ENCODE measurements at regions of chr5 and their contacts with region 1.

Region 1: DNA sequence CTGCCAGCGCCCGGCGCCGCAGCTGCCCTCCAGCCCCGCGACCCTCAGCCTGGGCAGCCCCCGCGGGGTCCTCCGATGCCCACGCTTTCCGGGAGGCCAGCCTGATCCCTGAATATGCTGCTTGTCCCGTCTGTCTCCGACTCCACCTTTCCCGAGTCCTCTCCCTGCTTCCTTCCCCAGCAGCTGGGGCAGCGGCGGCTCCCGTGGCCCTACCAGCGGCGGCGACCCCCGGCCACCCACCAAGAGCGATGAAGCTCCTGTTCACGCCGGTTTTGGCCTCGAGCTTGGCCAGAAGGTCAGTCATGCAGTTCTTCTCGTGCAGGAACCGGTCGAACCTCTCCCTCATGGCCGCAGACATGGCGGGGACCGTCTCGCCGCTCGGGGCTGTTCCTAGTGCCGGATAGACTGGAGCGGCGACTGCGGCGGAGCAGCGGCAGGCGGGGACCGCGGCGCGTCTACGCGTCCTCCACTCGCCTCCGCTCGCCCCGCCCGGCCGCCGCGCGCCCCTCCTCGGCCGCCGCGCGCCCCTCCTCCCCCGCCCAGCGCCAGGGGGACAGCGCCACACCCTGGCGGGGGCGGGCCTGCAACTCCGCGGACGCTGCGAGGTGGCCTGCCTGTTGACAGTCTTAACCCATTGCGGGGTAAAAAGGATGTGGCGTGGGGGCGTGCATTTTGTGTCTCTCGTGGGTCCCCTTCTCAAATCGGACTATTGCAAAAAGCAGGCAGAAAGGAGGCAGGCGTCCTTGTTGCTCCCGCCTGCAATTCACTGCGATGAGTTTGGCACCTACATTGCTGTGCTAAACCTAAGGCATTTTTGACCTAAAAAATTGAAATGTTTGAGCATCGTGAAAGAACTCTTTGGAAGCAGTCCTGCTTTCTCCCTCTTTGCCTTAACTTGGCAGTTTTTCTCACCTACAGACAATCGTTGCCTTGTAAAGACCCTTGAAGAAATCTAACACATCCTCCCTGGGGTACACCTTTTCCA is at the start of gene REEP5:
- DNase-seq: peak; percentile 90
- H3K4me3 ChIP-seq: peak within 1 kb of the TSS; percentile 68 to 96 (median 83)
- H3K27ac ChIP-seq: peak within 1 kb of the TSS; percentile 93 to 99 (median 95)
- H3K4me1 ChIP-seq: peaks cover 0 to 44% (median 42%) of the 10 kb centered on the region in 4 donors
- H3K27me3 ChIP-seq: no peaks in the 10 kb centered on the region
- CTCF ChIP-seq: peak; percentile 26 to 84 (median 52)
- EP300 ChIP-seq: no peak
- POLR2A ChIP-seq: peak; percentile 67 to 78
- total RNA-seq, gene REEP5: 67.6 to 86.0 (median 71.8) TPM

Region 2: GRCh38 chr5:112860929-112861637 is 61.0 kb before region 1 on chr5 and contains the start of gene SRP19:
- intact Hi-C with region 1: loop called (anchors 1 kb)
- DNase-seq: peak; percentile 98
- H3K4me3 ChIP-seq: peak within 1 kb of the TSS; percentile 77 to 92 (median 87)
- H3K27ac ChIP-seq: peak within 1 kb of the TSS; percentile 79 to 92 (median 86)
- H3K4me1 ChIP-seq: peaks cover 0 to 33% (median 29%) of the 10 kb centered on the region in 4 donors
- H3K27me3 ChIP-seq: no peaks in the 10 kb centered on the region
- CTCF ChIP-seq: no peak
- EP300 ChIP-seq: no peak
- POLR2A ChIP-seq: peak; percentile 72 to 79
- total RNA-seq, gene SRP19: 37.1 to 58.2 (median 55.8) TPM

Region 3: GRCh38 chr5:112976432-112977309 is 54.5 kb after region 1 on chr5 and contains the start of gene DCP2:
- intact Hi-C with region 1: loop called (anchors 1 kb)
- DNase-seq: peak; percentile 97
- H3K4me3 ChIP-seq: peak within 1 kb of the TSS; percentile 77 to 93 (median 88)
- H3K27ac ChIP-seq: peak within 1 kb of the TSS; percentile 88 to 93 (median 91)
- H3K4me1 ChIP-seq: peaks cover 0 to 36% (median 18%) of the 10 kb centered on the region in 4 donors
- H3K27me3 ChIP-seq: no peaks in the 10 kb centered on the region
- CTCF ChIP-seq: no peak
- EP300 ChIP-seq: no peak
- POLR2A ChIP-seq: peak; percentile 61 to 65
- total RNA-seq, gene DCP2: 18.1 to 26.8 (median 20.8) TPM